Tibial artery (tissue), 4 donors: ENCODE measurements at regions of chr1 and their contacts with region 1.

Region 1: GRCh38 chr1:63773815-63774616 is at the start of gene ROR1:
- DNase-seq: peak; percentile 92 to 96
- H3K4me3 ChIP-seq: peak within 1 kb of the TSS; percentile 92 to 94
- H3K27ac ChIP-seq: peak within 1 kb of the TSS; percentile 99
- H3K4me1 ChIP-seq: peaks cover 0 to 45% (median 21%) of the 10 kb centered on the region in 4 donors
- H3K27me3 ChIP-seq: no peaks in the 10 kb centered on the region
- CTCF ChIP-seq: peak; percentile 75 to 77

Region 2: DNA sequence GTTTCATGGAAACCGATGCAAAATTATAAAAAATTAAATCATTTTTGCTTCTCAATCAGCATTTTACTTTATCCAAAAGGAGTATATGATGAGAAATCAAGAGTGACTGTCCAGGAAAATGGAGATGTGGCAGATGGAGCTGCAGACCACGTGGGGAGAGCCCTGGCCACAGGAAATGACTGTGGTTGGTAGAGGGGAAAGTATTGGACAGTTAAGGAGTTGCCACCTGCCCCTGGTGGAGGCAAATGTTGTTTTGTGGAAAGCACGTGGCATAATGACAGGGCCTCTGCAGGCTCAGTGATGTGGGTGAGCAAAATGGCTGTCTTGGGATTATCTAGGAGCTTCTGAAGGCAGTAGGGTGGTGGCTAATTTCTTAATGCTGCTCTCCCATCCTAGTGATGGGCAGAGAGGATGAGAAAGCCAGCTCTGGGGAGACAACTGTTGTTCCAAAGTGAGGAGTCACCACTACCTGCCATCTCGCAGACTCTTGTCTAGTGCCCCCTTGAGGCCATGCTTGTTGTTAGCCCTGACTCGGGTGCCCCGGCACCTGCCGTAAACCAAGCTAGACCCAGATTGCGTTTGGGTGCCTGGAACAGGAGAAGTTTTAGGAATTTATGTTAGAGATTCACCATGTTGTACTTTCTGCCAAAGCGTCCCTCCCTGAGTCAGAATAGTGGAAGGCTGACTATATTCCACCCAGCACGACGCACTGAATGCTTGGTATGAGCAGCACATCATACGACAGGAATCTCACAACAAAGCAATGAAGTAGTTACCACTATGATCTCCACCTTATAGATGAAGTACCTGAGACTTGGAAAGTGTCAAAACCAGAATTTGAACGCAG is 143.8 kb after region 1 on chr1:
- intact Hi-C with region 1: loop called (anchors 10 kb)
- DNase-seq: no peak
- H3K4me3 ChIP-seq: peak overlapping the region; percentile 8 to 27
- H3K27ac ChIP-seq: peak overlapping the region; percentile 66 to 76
- H3K4me1 ChIP-seq: peaks cover 0 to 92% (median 34%) of the 10 kb centered on the region in 4 donors
- H3K27me3 ChIP-seq: no peaks in the 10 kb centered on the region
- CTCF ChIP-seq: peak; percentile 14 to 28

Region 3: GRCh38 chr1:64136752-64137411 is 362.9 kb after region 1 on chr1:
- intact Hi-C with region 1: loop called (anchors 5 kb)
- DNase-seq: peak; percentile 85 to 92
- H3K4me3 ChIP-seq: no peak overlapping the region
- H3K27ac ChIP-seq: peak overlapping the region; percentile 5 to 32
- H3K4me1 ChIP-seq: peaks cover 0 to 44% (median 9%) of the 10 kb centered on the region in 4 donors
- H3K27me3 ChIP-seq: no peaks in the 10 kb centered on the region
- CTCF ChIP-seq: peak; percentile 90 to 92

Region 4: GRCh38 chr1:64173336-64173940 is 399.4 kb after region 1 on chr1:
- intact Hi-C with region 1: no loop called
- DNase-seq: no peak
- H3K4me3 ChIP-seq: no peak overlapping the region
- H3K27ac ChIP-seq: peak overlapping the region in 1 of 2 donors; percentile 20
- H3K4me1 ChIP-seq: peaks cover 0 to 23% (median 15%) of the 10 kb centered on the region in 4 donors
- H3K27me3 ChIP-seq: no peaks in the 10 kb centered on the region
- CTCF ChIP-seq: no peak